ENCODE measurements at regions of chr19 and their contacts with region 1.

Region 1: DNA sequence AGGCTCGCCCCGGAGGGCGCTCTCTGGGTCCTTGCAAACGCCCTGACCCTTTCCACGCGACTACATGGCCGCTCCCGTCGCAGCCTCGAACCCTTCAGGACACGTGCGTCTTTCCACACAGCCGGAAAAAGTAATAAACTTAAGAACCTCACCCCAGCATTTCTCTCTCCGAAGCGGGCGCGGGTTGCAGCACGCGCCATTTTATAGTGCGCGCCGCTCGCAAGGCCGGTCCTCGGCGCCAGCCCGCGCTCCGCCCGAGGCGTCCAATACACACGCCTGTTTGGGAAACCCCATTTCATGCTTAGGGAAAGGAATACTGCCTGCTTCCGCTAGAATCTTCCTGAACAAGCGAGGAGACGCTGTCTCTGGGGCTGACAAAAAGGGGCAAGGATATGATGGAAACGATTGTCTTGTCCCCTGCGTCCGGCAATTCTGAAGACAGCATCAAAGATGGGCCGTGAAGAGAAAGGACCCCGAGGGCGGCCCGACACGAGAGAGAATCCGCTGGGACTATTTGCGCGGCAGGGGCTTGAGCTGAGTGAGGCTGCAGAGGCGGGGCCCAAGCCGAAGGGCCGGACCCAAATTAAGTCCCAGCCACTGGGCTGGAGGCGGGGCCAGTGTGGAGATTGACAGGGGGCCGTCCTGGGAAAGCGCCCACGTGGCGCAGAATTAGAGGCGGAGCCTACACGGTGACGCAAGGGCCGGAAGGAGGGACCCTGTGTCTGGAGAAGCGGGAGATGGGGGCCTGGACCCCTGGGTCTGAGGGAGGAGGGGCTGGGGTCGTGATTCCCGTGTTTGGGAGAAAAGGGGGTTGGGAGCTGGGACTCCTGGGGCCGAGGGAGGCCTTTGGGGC is 14.4 kb downstream of the ACP4 start:
- DNase-seq: peak; percentile 98
- H3K4me3 ChIP-seq: peak overlapping the region; percentile 94 to 100 (median 97)
- H3K27ac ChIP-seq: peak overlapping the region; percentile 98
- H3K4me1 ChIP-seq: peaks cover 12% of the 10 kb centered on the region
- H3K27me3 ChIP-seq: no peaks in the 10 kb centered on the region
- CTCF ChIP-seq: no peak
- POLR2A ChIP-seq: peak; percentile 87

Region 2: DNA sequence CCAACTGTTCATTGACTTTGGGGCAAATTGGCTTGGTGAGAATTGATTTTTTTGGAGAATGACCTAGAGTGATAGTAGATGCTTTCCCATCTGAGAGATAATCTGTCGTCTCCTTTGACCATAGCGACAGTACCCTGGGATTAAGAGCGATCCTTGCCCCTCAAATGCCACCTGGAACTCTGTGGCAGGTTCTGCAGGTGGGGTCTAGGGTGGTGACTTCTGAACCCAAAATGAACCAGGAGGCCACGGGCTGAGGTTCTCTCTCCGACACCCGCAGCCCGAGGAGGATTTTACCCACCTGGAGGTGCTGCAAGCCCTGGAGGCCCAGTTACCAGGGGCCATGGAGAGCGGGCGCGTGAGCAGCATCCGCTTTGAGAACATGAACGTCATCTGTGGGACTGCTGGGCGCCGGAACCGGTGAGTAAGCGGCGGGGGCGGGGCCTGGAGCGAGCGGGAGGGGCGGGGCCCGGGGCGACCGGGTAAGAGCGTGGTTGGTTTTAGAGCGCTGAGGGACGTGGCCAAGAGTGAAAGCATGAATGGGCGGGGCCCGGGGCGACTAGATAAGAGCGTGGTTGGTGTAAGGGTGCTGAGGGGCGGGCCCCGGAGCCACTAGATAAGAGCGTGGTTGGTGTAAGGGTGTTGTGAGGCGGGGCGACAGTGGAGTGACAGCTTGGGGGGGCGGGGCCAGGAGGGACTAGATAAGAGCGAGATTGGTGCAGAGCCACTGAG is 146.8 kb before region 1 on chr19:
- CTCF ChIA-PET with region 1: no interaction called
- POLR2A ChIA-PET with region 1: no interaction called
- dilution Hi-C with region 1: no loop called
- intact Hi-C with region 1: loop called (anchors 1 kb)
- DNase-seq: peak; percentile 98
- H3K4me3 ChIP-seq: peak overlapping the region in 2 of 3 experiments; percentile 2 to 26
- H3K27ac ChIP-seq: peak overlapping the region; percentile 71
- H3K4me1 ChIP-seq: peaks cover 11% of the 10 kb centered on the region
- H3K27me3 ChIP-seq: peaks cover 0 to 2% of the 10 kb centered on the region in 2 experiments
- CTCF ChIP-seq: no peak
- POLR2A ChIP-seq: no peak

Region 3: DNA sequence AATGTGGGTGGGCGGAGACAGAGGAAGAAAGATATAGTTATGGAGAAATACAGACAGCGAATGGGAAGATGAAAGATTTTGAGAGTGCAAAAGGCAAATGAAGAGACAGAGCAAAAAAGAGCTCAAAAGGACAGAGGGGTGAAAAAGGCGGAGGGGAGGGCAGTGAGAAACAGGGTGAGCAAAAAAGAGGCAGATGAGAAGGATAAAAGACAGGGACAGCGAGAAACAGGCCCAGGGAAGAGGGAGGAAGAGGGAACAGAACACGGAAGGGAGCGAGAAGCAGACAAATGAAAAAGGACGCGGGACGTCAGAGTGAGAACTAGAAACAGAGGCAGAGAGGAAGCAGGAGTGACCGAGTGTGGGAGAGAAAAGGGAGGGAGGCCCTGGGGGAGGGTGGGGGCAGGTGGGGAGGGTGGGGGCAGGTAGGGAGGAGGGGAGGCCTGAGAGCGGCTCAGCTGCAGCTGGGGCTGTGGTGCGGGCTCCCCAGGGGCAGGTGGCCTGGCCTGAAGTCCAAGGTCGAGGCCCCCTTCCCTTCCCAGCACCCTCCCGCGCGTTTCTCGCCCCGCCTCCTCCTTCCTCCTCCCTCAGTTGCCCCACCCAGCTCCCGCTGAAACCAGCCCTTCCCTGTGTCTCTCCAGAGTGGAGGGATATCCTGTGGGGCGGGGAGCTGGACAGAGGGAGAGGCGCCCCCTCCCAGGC is 16.1 kb after region 1 on chr19:
- CTCF ChIA-PET with region 1: no interaction called
- POLR2A ChIA-PET with region 1: no interaction called
- dilution Hi-C with region 1: no loop called
- intact Hi-C with region 1: no loop called
- DNase-seq: no peak
- H3K4me3 ChIP-seq: no peak overlapping the region
- H3K27ac ChIP-seq: no peak overlapping the region
- H3K4me1 ChIP-seq: no peaks in the 10 kb centered on the region
- H3K27me3 ChIP-seq: peaks cover 21 to 23% of the 10 kb centered on the region in 2 experiments
- CTCF ChIP-seq: no peak
- POLR2A ChIP-seq: no peak

Region 4: DNA sequence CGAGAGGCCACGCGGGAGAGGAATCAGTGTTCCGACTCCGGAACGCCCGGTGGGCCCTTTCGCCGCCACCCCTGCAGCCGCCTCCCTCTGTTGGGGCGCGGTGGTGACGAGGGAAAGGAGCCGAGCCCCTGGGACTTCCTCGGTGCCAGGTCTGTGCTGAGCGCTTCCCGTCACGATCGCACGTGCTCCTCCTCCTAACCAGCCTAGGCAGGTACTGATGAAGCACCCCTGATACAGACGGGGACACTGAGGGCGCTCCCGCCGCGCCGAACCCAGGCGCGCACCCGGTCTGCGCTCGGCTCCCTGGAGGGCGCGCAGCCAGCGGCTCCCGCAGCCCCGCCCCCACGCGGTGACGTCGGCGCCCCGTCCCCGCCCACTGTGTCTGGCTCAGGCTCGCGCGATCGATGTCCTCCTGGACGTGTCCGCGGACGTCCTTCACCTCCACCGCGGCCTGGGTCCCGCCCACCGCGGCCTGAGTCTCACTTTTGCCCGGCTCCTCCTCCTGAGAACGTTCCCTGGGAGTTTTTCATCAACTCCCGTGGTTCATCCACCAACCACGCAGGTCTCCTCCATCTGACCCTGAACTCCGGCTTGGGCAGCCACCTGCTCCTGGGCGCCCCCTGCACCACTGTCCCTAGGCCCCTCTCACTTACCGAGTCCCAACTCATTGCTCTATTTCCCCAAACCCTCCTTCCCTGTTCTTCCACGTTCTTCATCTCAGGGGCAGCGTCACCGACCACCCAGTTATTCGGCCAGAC is 31.3 kb after region 1 on chr19:
- CTCF ChIA-PET with region 1: interaction called, 3 read pairs
- POLR2A ChIA-PET with region 1: no interaction called
- dilution Hi-C with region 1: no loop called
- intact Hi-C with region 1: loop called (anchors 1 kb)
- DNase-seq: peak; percentile 72
- H3K4me3 ChIP-seq: peak overlapping the region; percentile 5 to 61 (median 60)
- H3K27ac ChIP-seq: no peak overlapping the region
- H3K4me1 ChIP-seq: peaks cover 4% of the 10 kb centered on the region
- H3K27me3 ChIP-seq: no peaks in the 10 kb centered on the region
- CTCF ChIP-seq: peak in 1 of 2 donors; percentile 2
- POLR2A ChIP-seq: peak; percentile 59

Measured in endothelial cell of umbilical vein (primary cell).